ENCODE measurements at regions of chr7 and their contacts with region 1.

Region 1: GRCh38 chr7:2863461-2864066 is 19.5 kb upstream of the GNA12 start:
- DNase-seq: peak; percentile 80 to 83
- ATAC-seq: peak; percentile 93 to 94
- H3K4me3 ChIP-seq: no peak overlapping the region
- H3K27ac ChIP-seq: peak overlapping the region; percentile 74 to 88
- H3K4me1 ChIP-seq: peaks cover 13% of the 10 kb centered on the region
- CTCF ChIP-seq: no peak
- EP300 ChIP-seq: no peak
- POLR2A ChIP-seq: no peak
- RAD21 ChIP-seq: 0 out of 5 replicates have a peak, but pooled peaks of 1 of the 2 experiments have one; percentile 2

Region 2: GRCh38 chr7:2621061-2621828 is 242.3 kb before region 1 on chr7:
- CTCF ChIA-PET with region 1: no interaction called
- POLR2A ChIA-PET with region 1: no interaction called
- DNase-seq: no peak
- ATAC-seq: no peak
- H3K4me3 ChIP-seq: no peak overlapping the region
- H3K27ac ChIP-seq: no peak overlapping the region
- H3K4me1 ChIP-seq: peaks cover 11% of the 10 kb centered on the region; the same call in 2 of the 3 replicates
- CTCF ChIP-seq: no peak
- EP300 ChIP-seq: no peak
- POLR2A ChIP-seq: no peak
- RAD21 ChIP-seq: no peak

Region 3: DNA sequence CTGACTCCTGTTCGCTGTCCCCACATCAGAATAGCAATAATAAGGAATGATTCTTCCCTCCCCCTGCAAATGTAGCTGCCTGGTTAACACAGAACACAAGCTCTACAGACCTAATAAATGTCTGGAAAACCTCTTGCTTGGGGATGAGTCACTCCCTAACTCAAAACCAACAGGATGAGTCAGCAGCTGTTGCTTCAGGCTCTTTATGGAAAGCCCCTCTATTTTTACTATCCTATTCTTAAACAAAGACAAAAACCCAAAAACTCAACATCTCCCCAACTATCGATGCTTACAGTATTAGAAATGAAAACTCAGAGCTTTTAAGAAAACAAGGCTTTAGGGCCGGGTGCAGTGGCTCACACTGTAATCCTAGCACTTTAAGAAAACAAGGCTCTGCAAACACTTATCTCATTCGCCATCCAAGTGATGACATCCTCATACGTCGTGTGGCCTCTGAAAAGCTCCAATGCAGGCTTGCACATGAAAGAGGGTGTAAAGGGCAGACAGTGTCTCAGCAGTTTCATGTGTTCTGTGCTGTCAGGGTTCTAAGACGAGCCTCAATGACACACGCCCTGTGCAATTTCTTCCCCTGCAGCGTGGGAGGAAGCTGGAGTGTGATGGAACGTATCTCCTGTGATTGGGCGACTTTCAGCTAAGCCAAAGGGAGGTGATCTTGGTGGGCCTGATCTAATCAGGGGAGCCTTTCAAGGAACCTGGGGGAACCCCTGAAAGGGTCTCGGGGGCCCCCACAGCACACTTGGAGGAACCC is 105.5 kb before region 1 on chr7:
- CTCF ChIA-PET with region 1: interaction called, 12 read pairs
- POLR2A ChIA-PET with region 1: no interaction called
- DNase-seq: peak; percentile 72 to 97
- ATAC-seq: peak; percentile 84 to 87
- H3K4me3 ChIP-seq: peak overlapping the region; percentile 16; the same call in 1 of the 3 replicates
- H3K27ac ChIP-seq: peak overlapping the region; percentile 92 to 95
- H3K4me1 ChIP-seq: peaks cover 48% of the 10 kb centered on the region
- CTCF ChIP-seq: no peak
- EP300 ChIP-seq: peak in 1 of 2 experiments; percentile 56; a peak in 2 of 5 replicates
- POLR2A ChIP-seq: no peak
- RAD21 ChIP-seq: peak; percentile 11 to 16; a peak in 1 of 5 replicates

Region 4: DNA sequence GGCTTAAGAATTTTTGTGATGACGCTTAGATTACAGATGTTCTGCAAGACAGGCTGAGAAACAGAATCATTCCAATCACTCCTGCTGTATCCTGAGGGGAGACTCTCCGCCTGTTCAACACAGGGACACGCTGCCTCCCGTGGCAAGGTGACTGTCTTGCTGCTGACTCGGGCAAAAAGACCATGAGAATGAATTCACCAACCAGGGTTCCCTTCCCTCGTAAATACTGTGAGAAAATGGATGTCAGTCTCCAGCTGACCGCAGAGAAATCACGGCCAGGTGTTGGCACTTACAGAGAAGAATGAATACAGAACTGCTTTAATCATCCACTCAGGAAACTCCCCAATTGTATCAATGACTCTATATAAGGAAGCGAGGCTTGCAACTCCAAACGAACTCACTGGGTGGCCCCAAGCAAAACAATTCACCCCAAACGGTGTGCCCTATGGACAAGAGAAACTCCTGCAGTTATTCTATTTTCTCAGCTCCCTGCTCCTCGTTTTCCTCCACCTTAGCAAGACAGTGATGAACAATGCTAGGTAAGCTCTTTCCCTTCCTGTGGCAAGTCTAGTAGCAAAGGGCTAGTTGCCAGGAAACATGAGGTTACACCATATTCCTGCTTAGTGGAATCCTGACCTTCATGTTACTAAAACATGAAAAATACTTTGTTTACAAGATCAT is 42.3 kb before region 1 on chr7:
- CTCF ChIA-PET with region 1: interaction called, 11 read pairs
- POLR2A ChIA-PET with region 1: no interaction called
- DNase-seq: peak; percentile 56 to 62
- ATAC-seq: peak; percentile 71 to 74
- H3K4me3 ChIP-seq: 0 out of 3 replicates have a peak overlapping the region, but pooled peaks have one; percentile 3
- H3K27ac ChIP-seq: peak overlapping the region; percentile 77 to 89
- H3K4me1 ChIP-seq: peaks cover 63% of the 10 kb centered on the region
- CTCF ChIP-seq: no peak
- EP300 ChIP-seq: no peak; a peak in 1 of 5 replicates
- POLR2A ChIP-seq: no peak
- RAD21 ChIP-seq: peak in 1 of 2 experiments; percentile 25; a peak in 1 of 5 replicates

Region 5: DNA sequence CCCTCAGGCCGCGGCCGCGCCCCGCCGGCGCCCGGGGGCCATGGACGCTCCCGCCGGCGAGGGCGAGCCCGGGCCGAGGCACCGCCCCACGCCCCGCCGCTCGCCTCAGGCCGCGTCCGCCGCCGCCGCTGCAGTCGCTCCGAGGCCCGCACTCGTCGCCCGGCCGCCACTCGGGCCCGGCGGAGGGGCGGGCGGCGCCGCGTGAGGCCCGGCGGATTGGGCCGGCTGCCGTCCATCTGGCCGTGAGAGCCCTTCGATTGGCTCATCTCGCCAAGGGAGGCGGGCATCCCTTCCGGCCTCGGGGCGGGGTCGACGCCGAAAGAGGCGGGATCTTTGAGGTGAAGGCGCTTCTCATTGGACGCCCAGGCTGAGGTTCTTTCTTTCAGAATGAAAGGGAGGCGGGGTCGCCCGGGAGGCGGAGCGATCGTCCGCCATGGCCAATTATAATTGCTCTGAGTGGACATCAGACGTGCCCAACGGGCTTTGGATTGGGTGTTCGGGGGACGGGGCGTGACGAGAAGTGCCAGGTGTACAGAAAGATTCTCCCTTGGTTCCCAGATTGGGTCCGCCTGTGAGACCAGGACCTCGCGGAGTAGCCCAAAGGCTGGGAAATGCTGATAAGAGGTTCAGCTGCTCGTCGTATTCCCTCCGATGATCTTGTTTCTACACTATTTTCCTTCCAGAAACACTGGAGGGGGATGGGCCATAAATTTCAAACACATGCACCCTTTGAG is 19.2 kb before region 1 on chr7 and contains the start of gene GNA12:
- CTCF ChIA-PET with region 1: interaction called, 10 read pairs
- POLR2A ChIA-PET with region 1: no interaction called
- DNase-seq: peak; percentile 98 to 99
- ATAC-seq: peak; percentile 98
- H3K4me3 ChIP-seq: peak within 1 kb of the TSS; percentile 75
- H3K27ac ChIP-seq: peak within 1 kb of the TSS; percentile 75 to 96
- H3K4me1 ChIP-seq: peaks cover 10% of the 10 kb centered on the region
- CTCF ChIP-seq: no peak
- EP300 ChIP-seq: no peak
- POLR2A ChIP-seq: peak; percentile 82
- RAD21 ChIP-seq: no peak
- polyA plus RNA-seq, gene GNA12: 43.7 and 44.0 TPM in 2 replicates

Region 6: DNA sequence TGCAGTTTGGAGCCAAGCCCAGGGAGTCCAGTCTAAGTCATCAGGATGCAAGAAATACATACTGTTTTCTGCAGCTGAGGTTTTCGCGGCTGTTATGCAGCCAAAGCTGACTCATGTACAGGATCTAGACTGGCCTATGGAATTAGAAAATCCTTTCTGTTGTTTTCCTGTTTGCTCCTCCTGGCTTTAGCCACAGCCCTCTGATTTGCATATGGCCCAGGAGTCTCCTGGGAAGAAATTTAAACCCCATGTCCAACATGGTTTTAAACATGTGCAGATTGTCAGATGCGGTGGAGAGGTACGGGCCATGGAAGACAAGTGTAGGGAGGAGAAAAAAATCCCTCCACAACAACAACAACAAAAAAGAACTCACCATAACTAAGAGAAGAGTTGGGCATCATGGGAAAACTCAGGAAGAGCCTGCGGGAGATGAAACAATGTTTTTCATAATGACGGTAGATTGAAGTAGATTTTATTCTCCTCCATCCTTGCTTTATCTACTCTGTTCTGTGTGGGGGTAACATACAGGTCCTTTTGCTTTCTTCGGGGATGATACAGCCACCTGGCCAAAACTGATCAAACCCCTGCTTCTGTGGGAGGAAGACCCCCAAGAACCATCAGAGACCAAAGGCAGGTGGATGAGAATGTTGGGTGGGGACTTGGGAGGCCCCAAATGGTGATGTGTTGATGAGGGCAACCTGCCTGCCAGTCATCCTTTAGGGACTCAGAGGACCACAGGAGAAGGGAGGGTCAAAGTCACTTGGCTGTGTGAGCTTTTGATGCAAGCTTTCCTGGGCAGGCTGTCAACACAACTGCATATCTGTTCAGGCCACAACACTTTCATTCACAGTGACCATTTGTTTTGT is 10.4 kb after region 1 on chr7:
- CTCF ChIA-PET with region 1: interaction called, 50 read pairs
- POLR2A ChIA-PET with region 1: interaction called, 3 read pairs
- DNase-seq: peak; percentile 73 to 79
- ATAC-seq: peak; percentile 64 to 81
- H3K4me3 ChIP-seq: no peak overlapping the region
- H3K27ac ChIP-seq: peak overlapping the region; percentile 74 to 77
- H3K4me1 ChIP-seq: peaks cover 11% of the 10 kb centered on the region
- CTCF ChIP-seq: no peak
- EP300 ChIP-seq: no peak
- POLR2A ChIP-seq: peak; percentile 90
- RAD21 ChIP-seq: no peak

Region 7: DNA sequence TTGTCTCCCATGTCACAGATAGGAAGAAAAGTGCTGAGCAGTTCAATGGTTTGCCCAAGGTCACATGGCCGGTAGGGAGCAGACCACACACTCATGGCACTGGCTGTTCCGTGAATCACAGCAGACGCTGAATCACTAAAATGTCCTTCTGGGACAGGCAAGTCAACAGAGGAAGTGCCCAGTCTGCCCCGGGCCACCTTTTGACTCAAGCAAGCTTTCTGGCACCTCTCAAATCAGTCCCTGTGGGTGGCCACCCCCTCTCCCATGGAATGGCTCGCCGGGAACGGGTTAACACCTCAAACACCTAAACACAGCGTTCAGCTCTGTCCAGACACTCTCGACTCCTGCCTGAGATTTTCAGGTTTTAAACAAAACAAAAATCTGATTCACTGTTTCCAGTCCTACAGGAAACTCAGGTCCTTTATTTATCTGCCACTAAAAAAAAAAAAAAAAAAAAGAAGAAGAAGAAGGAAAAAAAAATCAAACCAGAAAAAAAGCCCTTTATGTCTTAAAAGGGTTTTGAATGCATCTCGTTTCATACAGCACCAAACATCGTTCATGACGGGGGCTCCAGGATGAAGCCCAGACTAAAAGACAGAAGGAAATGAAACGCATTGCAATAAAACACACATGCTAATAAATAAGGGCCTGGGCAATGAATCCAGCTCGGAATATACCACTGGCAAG is 164.7 kb after region 1 on chr7:
- CTCF ChIA-PET with region 1: no interaction called
- POLR2A ChIA-PET with region 1: no interaction called
- DNase-seq: peak; percentile 64 to 79
- ATAC-seq: peak; percentile 94 to 97
- H3K4me3 ChIP-seq: no peak overlapping the region
- H3K27ac ChIP-seq: peak overlapping the region; percentile 67 to 83
- H3K4me1 ChIP-seq: peaks cover 21% of the 10 kb centered on the region
- CTCF ChIP-seq: no peak
- EP300 ChIP-seq: peak in 1 of 2 experiments; percentile 20; a peak in 2 of 5 replicates
- POLR2A ChIP-seq: no peak
- RAD21 ChIP-seq: no peak

Region 8: GRCh38 chr7:3154912-3155494 is 291.4 kb after region 1 on chr7:
- CTCF ChIA-PET with region 1: interaction called, 16 read pairs
- POLR2A ChIA-PET with region 1: no interaction called
- DNase-seq: peak; percentile 45 to 53
- ATAC-seq: peak in 1 of 2 experiments; percentile 69; a peak in 2 of 6 replicates
- H3K4me3 ChIP-seq: no peak overlapping the region
- H3K27ac ChIP-seq: no peak overlapping the region
- H3K4me1 ChIP-seq: no peaks in the 10 kb centered on the region
- CTCF ChIP-seq: peak; percentile 63
- EP300 ChIP-seq: no peak
- POLR2A ChIP-seq: no peak
- RAD21 ChIP-seq: peak; percentile 73 to 82

Region 9: DNA sequence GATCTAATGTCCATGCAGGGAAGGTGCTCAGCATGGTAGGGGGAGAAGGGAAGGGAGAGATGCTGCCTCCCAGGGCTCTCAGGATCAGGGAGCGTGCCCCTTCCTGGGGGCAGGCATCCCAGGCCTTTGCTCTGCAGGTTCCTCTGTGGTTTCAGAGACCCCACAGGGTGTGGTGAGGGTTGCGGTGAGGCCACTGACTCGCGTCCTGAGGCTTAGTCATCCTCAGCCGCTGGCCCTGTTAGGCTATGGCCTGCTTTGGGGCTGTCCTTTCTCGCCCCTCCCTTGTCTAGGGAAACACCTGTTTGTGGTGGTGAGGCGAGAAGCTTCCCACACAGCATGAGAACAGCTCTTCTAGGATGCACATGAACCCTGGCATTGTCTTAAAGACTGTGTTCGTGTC is 1260.3 kb after region 1 on chr7:
- CTCF ChIA-PET with region 1: no interaction called
- POLR2A ChIA-PET with region 1: no interaction called
- DNase-seq: no peak
- ATAC-seq: no peak
- H3K4me3 ChIP-seq: no peak overlapping the region
- H3K27ac ChIP-seq: no peak overlapping the region
- H3K4me1 ChIP-seq: no peaks in the 10 kb centered on the region
- CTCF ChIP-seq: no peak
- EP300 ChIP-seq: no peak
- POLR2A ChIP-seq: no peak
- RAD21 ChIP-seq: no peak

Region 10: DNA sequence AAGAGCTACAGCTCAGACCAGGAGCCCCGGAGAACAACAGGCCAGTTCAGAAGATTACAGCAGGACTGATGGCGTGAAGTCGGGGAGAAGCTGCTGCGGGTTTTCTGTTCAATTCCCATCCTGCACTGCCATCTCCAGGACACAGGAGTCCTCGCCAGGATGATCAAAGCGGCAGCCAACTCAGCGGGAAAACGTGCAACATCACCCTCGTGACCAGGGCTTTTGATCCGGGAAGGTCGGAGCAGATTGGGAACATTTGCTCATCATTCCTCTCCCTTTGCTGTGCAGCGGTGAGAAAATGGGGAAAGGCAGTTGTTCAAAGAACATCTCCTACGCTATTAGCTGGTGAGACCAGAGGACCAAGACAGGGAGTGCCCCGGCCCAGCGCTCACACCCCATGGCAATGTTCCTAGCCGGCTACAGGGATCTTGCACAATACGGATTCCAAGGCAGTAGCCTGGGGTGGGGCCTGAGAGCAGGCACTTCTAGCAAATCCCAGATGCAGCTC is 1768.2 kb after region 1 on chr7:
- CTCF ChIA-PET with region 1: interaction called, 18 read pairs
- POLR2A ChIA-PET with region 1: no interaction called
- DNase-seq: peak; percentile 96 to 98
- ATAC-seq: peak; percentile 97 to 98
- H3K4me3 ChIP-seq: peak overlapping the region; percentile 24
- H3K27ac ChIP-seq: peak overlapping the region; percentile 84 to 87
- H3K4me1 ChIP-seq: peaks cover 27% of the 10 kb centered on the region
- CTCF ChIP-seq: peak; percentile 86
- EP300 ChIP-seq: peak in 1 of 2 experiments; percentile 58; a peak in 1 of 5 replicates
- POLR2A ChIP-seq: 0 out of 2 replicates have a peak, but pooled peaks have one; percentile 16
- RAD21 ChIP-seq: peak; percentile 96